PC-9 (cell line): ENCODE measurements at regions of chr5 and their contacts with region 1.

Region 1: DNA sequence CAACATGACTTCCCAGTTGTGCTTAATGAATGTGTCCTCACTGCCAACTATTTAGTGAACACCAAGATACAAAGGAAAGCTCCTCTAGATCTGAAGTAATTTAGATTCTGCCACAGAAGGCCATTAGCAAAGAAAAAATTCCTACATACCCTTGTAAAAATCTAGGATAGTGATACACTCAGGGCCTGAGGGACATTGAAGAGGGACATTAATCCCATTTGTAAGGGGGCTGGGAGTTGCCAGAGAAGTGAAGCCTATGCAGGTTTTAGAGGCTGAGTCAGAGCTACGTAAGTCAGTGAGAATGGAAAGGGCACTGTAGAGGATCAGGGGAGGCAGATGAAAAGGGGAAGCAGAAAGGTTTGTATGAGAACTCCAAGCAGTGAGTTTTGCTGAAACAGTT is 286.9 kb upstream of the TARS1 start:
- DNase-seq: no peak
- H3K4me3 ChIP-seq: no peak overlapping the region
- H3K27ac ChIP-seq: no peak overlapping the region
- H3K4me1 ChIP-seq: peaks cover 4% of the 10 kb centered on the region; the same call in 1 of the 2 replicates
- H3K27me3 ChIP-seq: no peaks in the 10 kb centered on the region
- CTCF ChIP-seq: no peak

Region 2: GRCh38 chr5:33023649-33024048 is 130.2 kb before region 1 on chr5:
- CTCF ChIA-PET with region 1: no interaction called
- POLR2A ChIA-PET with region 1: interaction called, 25 read pairs
- intact Hi-C with region 1: no loop called
- DNase-seq: no peak
- H3K4me3 ChIP-seq: no peak overlapping the region
- H3K27ac ChIP-seq: no peak overlapping the region
- H3K4me1 ChIP-seq: no peaks in the 10 kb centered on the region
- H3K27me3 ChIP-seq: no peaks in the 10 kb centered on the region
- CTCF ChIP-seq: no peak

Region 3: GRCh38 chr5:33091571-33092363 is 62.1 kb before region 1 on chr5:
- CTCF ChIA-PET with region 1: no interaction called
- POLR2A ChIA-PET with region 1: no interaction called
- intact Hi-C with region 1: no loop called
- DNase-seq: no peak
- H3K4me3 ChIP-seq: no peak overlapping the region
- H3K27ac ChIP-seq: 0 out of 2 replicates have a peak overlapping the region, but pooled peaks have one; percentile 5
- H3K4me1 ChIP-seq: peaks cover 12% of the 10 kb centered on the region
- H3K27me3 ChIP-seq: no peaks in the 10 kb centered on the region
- CTCF ChIP-seq: no peak

Region 4: DNA sequence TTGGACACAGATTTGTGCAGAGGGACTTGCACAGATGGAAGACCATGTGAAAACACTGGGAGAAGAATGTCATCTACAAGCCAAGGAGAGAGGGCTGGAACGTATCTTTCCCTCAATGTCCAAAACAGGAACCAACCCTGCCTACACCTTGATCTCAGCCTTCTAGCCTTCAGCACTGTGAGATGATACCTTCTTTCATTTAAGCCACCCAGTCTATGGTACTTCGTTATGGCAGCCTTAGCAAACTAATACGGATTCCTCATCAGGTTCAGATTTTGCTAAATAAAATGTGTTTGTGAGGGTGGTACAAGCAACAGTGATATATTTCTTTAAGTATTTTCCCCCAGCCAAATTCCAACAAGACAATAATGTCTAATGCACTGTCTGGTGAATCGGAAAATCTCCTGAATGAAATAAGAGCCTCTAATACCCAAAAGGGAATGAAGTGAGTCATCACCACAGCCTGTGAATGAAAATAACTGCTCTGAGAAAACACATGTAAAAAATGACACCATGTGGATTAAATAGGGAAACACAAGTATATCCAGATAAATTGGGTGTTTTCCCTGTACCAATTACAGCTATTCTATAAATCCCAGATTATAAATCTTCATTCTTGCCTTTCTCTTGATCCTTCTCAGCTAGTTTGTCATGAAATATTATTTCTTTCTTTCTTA is 104.1 kb after region 1 on chr5:
- CTCF ChIA-PET with region 1: no interaction called
- POLR2A ChIA-PET with region 1: no interaction called
- intact Hi-C with region 1: no loop called
- DNase-seq: no peak
- H3K4me3 ChIP-seq: no peak overlapping the region
- H3K27ac ChIP-seq: no peak overlapping the region
- H3K4me1 ChIP-seq: no peaks in the 10 kb centered on the region
- H3K27me3 ChIP-seq: no peaks in the 10 kb centered on the region
- CTCF ChIP-seq: no peak; the same call in 1 of the 2 replicates

Region 5: DNA sequence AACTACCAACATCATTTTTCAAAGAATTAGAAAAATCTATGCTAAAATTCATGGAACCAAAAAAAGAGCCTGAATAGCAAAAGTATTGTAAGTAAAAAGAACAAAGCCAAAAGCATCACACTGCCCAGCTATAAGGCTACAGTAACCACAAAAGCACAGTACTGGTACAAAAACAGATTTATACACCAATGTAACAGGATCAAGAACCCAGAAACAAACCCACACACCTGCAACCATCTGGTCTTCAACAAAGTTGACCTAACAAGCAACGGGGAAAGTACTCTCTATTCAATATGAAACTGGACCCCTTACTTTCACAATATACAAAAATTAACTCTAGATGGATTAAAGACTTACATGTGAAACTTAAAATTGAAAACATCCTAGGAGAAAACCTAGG is 192.7 kb after region 1 on chr5:
- CTCF ChIA-PET with region 1: no interaction called
- POLR2A ChIA-PET with region 1: no interaction called
- intact Hi-C with region 1: no loop called
- DNase-seq: no peak
- H3K4me3 ChIP-seq: no peak overlapping the region
- H3K27ac ChIP-seq: no peak overlapping the region
- H3K4me1 ChIP-seq: 0 out of 2 replicates have a peak, but pooled peaks cover 8% of the 10 kb centered on the region
- H3K27me3 ChIP-seq: no peaks in the 10 kb centered on the region
- CTCF ChIP-seq: no peak